CD8-positive, alpha-beta T cell (primary cell): ENCODE measurements at regions of chr9 and their contacts with region 1.

Region 1: GRCh38 chr9:133459476-133460404 is at the start of gene CACFD1:
- DNase-seq: peak; percentile 77 to 96 (median 93)
- ATAC-seq: peak; percentile 80
- H3K4me3 ChIP-seq: peak within 1 kb of the TSS; percentile 71 to 76
- H3K4me3 Mint-ChIP-seq: peak within 1 kb of the TSS; percentile 87
- H3K27ac ChIP-seq: peak within 1 kb of the TSS; percentile 74 to 80
- H3K27ac Mint-ChIP-seq: peak within 1 kb of the TSS; percentile 97
- H3K4me1 ChIP-seq: peaks cover 14% of the 10 kb centered on the region
- H3K4me1 Mint-ChIP-seq: peaks cover 12% of the 10 kb centered on the region
- H3K27me3 ChIP-seq: no peaks in the 10 kb centered on the region
- H3K27me3 Mint-ChIP-seq: no peaks in the 10 kb centered on the region
- CTCF ChIP-seq: no peak
- total RNA-seq, gene CACFD1: 7.4 to 9.7 TPM

Region 2: DNA sequence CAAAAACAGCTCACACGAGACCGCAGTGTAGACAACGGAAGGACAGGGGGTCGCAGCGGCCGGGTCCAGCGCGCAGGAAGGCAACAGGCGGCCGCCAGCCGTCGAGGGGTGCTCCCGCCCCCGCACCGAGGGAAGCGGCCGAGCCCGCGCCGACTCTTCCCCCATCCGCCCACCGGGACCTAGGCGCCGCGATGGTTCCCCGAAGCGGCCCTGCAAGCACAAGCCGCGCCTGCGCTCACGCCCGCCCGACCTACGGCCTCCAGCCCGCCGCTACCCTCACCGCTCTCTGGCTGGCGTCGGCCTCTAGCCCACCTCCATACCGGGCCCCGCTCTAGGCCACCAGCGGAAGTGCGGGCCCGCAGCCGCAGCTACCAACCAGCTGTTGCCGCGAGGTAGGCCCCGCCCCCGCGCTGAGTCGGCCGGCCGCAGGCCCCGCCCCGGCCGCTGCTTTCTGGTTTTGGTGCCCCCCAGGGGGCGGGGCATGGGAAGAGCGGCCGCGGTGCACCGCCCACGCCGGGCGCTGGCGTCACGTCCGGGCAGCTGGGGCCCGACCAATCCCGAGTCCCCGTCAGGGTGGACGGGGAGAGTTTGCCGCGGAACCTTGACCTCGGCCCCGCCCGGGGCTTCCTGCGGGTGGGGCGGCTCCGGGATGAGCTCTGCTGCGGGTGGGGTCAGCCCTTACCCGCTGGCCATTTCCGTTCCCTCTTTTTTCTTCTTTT is 1104.9 kb before region 1 on chr9 and contains the start of gene SETX:
- CTCF ChIA-PET with region 1: no interaction called
- POLR2A ChIA-PET with region 1: no interaction called
- intact Hi-C with region 1: loop called in 1 of 2 experiments (anchors 10 kb)
- DNase-seq: peak; percentile 92 to 99 (median 97)
- ATAC-seq: peak; percentile 83
- H3K4me3 ChIP-seq: peak within 1 kb of the TSS; percentile 77 to 86
- H3K4me3 Mint-ChIP-seq: peak within 1 kb of the TSS; percentile 87
- H3K27ac ChIP-seq: peak within 1 kb of the TSS; percentile 94 to 97
- H3K27ac Mint-ChIP-seq: peak within 1 kb of the TSS; percentile 98
- H3K4me1 ChIP-seq: peaks cover 40% of the 10 kb centered on the region
- H3K4me1 Mint-ChIP-seq: peaks cover 44% of the 10 kb centered on the region
- H3K27me3 ChIP-seq: no peaks in the 10 kb centered on the region
- H3K27me3 Mint-ChIP-seq: no peaks in the 10 kb centered on the region
- CTCF ChIP-seq: no peak
- total RNA-seq, gene SETX: 37.5 to 40.7 TPM

Region 3: GRCh38 chr9:133023117-133023890 is 436.4 kb before region 1 on chr9:
- CTCF ChIA-PET with region 1: no interaction called
- POLR2A ChIA-PET with region 1: no interaction called
- intact Hi-C with region 1: loop called in 1 of 2 experiments (anchors 2 kb)
- DNase-seq: peak in 5 of 9 experiments; percentile 19 to 53 (median 39)
- ATAC-seq: no peak
- H3K4me3 ChIP-seq: no peak overlapping the region
- H3K4me3 Mint-ChIP-seq: no peak overlapping the region
- H3K27ac ChIP-seq: no peak overlapping the region
- H3K27ac Mint-ChIP-seq: no peak overlapping the region
- H3K4me1 ChIP-seq: peaks cover 4% of the 10 kb centered on the region
- H3K4me1 Mint-ChIP-seq: peaks cover 13% of the 10 kb centered on the region
- H3K27me3 ChIP-seq: no peaks in the 10 kb centered on the region
- H3K27me3 Mint-ChIP-seq: no peaks in the 10 kb centered on the region
- CTCF ChIP-seq: no peak

Region 4: DNA sequence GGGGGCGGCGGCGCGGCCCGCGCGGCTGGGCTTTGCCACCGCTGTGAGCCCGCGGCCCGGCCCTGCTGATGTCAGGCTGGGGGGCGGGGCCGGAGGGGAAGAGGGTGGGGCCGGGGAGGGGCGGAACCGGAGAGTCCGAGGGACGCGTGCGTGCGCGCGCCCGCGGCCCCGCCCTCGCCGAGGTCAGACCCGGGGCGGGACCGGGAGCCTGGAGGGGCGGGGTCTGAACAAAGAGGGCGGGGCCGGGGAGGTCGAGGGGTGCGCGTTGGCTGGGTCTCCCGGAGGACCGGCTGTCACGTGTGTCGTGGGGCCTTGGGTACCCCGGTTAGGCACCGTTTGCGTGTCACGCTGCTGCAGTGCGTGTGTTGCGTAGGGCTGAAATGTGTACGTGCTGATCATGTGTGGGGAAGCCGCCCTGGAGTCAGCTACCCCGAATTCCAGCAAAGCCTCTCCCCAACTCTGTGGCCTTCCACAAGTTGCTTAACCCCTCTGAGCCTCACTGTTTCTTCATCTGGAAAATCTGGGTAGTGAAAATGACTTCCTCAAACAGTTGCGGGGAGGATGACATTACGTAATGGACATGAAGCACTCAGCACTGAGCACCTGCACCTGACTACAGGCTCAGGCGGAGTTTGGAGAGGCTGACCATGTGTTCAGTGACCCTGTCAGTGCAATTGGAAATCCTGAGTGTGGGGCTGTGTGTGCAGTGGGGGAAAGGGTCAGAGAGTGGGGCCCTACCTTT is 338.4 kb before region 1 on chr9 and contains the start of gene RALGDS:
- CTCF ChIA-PET with region 1: no interaction called
- POLR2A ChIA-PET with region 1: no interaction called
- intact Hi-C with region 1: loop called in 1 of 2 experiments (anchors 1 kb)
- DNase-seq: peak; percentile 84 to 95 (median 92)
- ATAC-seq: peak; percentile 83
- H3K4me3 ChIP-seq: peak within 1 kb of the TSS; percentile 41 to 53
- H3K4me3 Mint-ChIP-seq: peak within 1 kb of the TSS; percentile 84
- H3K27ac ChIP-seq: peak within 1 kb of the TSS; percentile 66 to 96
- H3K27ac Mint-ChIP-seq: peak within 1 kb of the TSS; percentile 98
- H3K4me1 ChIP-seq: peaks cover 63% of the 10 kb centered on the region
- H3K4me1 Mint-ChIP-seq: peaks cover 70% of the 10 kb centered on the region
- H3K27me3 ChIP-seq: no peaks in the 10 kb centered on the region
- H3K27me3 Mint-ChIP-seq: no peaks in the 10 kb centered on the region
- CTCF ChIP-seq: no peak
- total RNA-seq, gene RALGDS: 177 to 186 TPM

Region 5: GRCh38 chr9:133417541-133418461 is 41.9 kb before region 1 on chr9 and contains the start of gene REXO4:
- CTCF ChIA-PET with region 1: interaction called, 4 read pairs
- POLR2A ChIA-PET with region 1: interaction called, 8 read pairs
- intact Hi-C with region 1: loop called (anchors 1 to 2 kb)
- DNase-seq: peak; percentile 73 to 91 (median 81)
- ATAC-seq: peak; percentile 88
- H3K4me3 ChIP-seq: peak within 1 kb of the TSS; percentile 80 to 88
- H3K4me3 Mint-ChIP-seq: peak within 1 kb of the TSS; percentile 87
- H3K27ac ChIP-seq: peak within 1 kb of the TSS; percentile 68 to 89
- H3K27ac Mint-ChIP-seq: peak within 1 kb of the TSS; percentile 90
- H3K4me1 ChIP-seq: peaks cover 23% of the 10 kb centered on the region
- H3K4me1 Mint-ChIP-seq: peaks cover 54% of the 10 kb centered on the region
- H3K27me3 ChIP-seq: no peaks in the 10 kb centered on the region
- H3K27me3 Mint-ChIP-seq: no peaks in the 10 kb centered on the region
- CTCF ChIP-seq: no peak
- total RNA-seq, gene REXO4: 22.5 to 24.0 TPM

Region 6: GRCh38 chr9:133478851-133479711 is 19.3 kb after region 1 on chr9 and contains the start of gene SLC2A6:
- CTCF ChIA-PET with region 1: no interaction called
- POLR2A ChIA-PET with region 1: interaction called, 7 read pairs
- intact Hi-C with region 1: loop called (anchors 1 kb)
- DNase-seq: peak; percentile 58 to 92 (median 81)
- ATAC-seq: peak; percentile 96
- H3K4me3 ChIP-seq: peak within 1 kb of the TSS; percentile 62 to 65
- H3K4me3 Mint-ChIP-seq: peak within 1 kb of the TSS; percentile 75
- H3K27ac ChIP-seq: peak within 1 kb of the TSS; percentile 56 to 59
- H3K27ac Mint-ChIP-seq: peak within 1 kb of the TSS; percentile 72
- H3K4me1 ChIP-seq: peaks cover 15% of the 10 kb centered on the region
- H3K4me1 Mint-ChIP-seq: peaks cover 10% of the 10 kb centered on the region
- H3K27me3 ChIP-seq: no peaks in the 10 kb centered on the region
- H3K27me3 Mint-ChIP-seq: no peaks in the 10 kb centered on the region
- CTCF ChIP-seq: no peak
- total RNA-seq, gene SLC2A6: 8.0 to 9.7 TPM

Region 7: GRCh38 chr9:134024828-134025605 is 565.3 kb after region 1 on chr9 and contains the start of gene BRD3OS:
- CTCF ChIA-PET with region 1: no interaction called
- POLR2A ChIA-PET with region 1: no interaction called
- intact Hi-C with region 1: loop called in 1 of 2 experiments (anchors 2 kb)
- DNase-seq: peak; percentile 81 to 98 (median 90)
- ATAC-seq: peak; percentile 96
- H3K4me3 ChIP-seq: peak within 1 kb of the TSS; percentile 71 to 92
- H3K4me3 Mint-ChIP-seq: peak within 1 kb of the TSS; percentile 80
- H3K27ac ChIP-seq: peak within 1 kb of the TSS; percentile 56 to 65
- H3K27ac Mint-ChIP-seq: peak within 1 kb of the TSS; percentile 45
- H3K4me1 ChIP-seq: peaks cover 11% of the 10 kb centered on the region
- H3K4me1 Mint-ChIP-seq: peaks cover 11% of the 10 kb centered on the region
- H3K27me3 ChIP-seq: no peaks in the 10 kb centered on the region
- H3K27me3 Mint-ChIP-seq: no peaks in the 10 kb centered on the region
- CTCF ChIP-seq: no peak
- total RNA-seq, gene BRD3OS: 3.3 to 4.2 TPM